CD14-positive monocyte (primary cell): ENCODE measurements at regions of chr19 and their contacts with region 1.

Region 1: DNA sequence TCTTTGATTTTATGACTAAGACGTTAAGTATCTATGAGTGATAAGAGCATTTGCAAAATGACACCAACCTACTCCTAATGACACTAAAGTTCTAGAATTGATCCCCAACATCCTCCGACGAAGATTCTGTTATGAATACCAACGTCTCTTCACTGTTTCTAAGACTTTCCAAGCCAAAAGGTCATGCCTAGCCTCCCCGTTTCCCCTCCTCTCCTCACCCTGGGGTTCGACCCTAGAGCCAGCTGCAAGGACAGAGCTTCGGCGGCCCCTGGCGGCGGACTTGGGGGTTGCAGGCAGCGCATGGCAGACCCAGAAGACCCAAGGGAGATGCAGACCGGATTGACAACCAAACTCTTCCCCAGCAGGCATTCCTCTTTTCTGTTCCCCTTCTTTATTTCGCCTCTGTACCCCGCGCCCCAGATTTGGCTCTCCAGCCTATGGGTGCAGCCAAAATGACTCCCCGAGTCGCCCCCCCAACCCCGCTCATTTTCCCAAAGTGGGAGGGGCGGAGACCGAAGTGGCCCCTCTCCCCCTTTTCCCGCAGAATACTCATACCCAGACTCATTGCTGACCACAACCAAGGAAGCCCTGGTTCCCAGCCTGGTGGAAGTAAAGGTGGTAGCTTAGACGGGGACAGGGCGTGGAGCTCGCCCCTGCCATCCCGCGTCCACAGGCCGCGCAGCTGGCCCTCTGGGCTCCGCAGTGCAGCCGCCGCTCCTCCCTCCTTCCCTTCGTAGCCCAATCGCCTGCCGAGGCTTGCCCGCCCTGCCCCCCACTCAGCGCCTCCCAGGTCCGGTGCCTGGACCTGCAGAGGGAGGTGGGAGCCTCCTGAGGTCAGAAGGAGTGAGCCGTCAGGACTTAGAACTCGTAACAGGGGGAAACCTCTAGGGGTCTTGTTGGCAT is 4.1 kb upstream of the EML2 start:
- DNase-seq: peak; percentile 82 to 86 (median 82)
- H3K4me3 ChIP-seq: peak overlapping the region in 1 of 3 experiments; percentile 28
- H3K4me3 Mint-ChIP-seq: peak overlapping the region; percentile 69 to 83
- H3K27ac ChIP-seq: peak overlapping the region; percentile 52 to 96
- H3K27ac Mint-ChIP-seq: peak overlapping the region; percentile 57 to 96 (median 92)
- H3K4me1 ChIP-seq: peaks cover 59 to 67% of the 10 kb centered on the region in 2 donors
- H3K4me1 Mint-ChIP-seq: peaks cover 46% of the 10 kb centered on the region
- H3K27me3 ChIP-seq: peaks cover 16 to 33% of the 10 kb centered on the region in 2 donors
- H3K27me3 Mint-ChIP-seq: peaks cover 39 to 46% (median 40%) of the 10 kb centered on the region in 3 donors
- CTCF ChIP-seq: peak; percentile 97

Region 2: DNA sequence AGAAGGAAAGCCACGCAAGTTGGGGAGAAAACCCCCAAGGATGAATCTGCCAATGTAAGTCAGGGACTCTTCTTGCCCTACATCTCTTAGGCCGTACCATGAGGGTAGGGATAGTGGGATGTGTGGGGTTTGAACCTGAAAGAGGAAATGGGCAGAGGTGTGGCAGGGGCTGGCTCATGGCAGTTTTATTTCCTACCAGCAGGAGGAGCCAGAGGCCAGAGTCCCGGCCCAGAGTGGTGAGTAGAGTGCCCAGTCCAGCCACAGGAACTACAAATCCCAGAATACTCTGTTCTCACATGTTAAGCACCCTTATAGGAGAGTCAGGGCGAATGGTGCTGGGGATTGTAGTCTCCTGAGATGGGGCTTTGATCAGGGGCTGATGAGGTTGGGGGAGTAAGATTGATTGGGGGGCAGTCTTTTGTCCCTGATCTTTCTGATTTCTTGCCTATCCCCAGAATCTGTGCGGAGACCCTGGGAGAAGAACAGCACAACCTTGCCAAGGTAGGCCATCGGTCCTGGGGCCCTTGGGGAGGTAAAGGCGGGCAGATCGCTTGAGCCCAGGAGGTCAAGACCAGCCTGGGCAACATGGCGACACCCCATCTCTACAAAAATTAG is 119.5 kb before region 1 on chr19:
- intact Hi-C with region 1: loop called (anchors 10 kb)
- DNase-seq: peak; percentile 88 to 93 (median 91)
- H3K4me3 ChIP-seq: peak overlapping the region in 1 of 3 experiments; percentile 45
- H3K4me3 Mint-ChIP-seq: peak overlapping the region in 1 of 2 donors; percentile 30
- H3K27ac ChIP-seq: peak overlapping the region; percentile 67 to 91
- H3K27ac Mint-ChIP-seq: peak overlapping the region; percentile 92 to 98 (median 94)
- H3K4me1 ChIP-seq: peaks cover 78 to 84% of the 10 kb centered on the region in 2 donors
- H3K4me1 Mint-ChIP-seq: peaks cover 67% of the 10 kb centered on the region
- H3K27me3 ChIP-seq: peaks cover 0 to 8% of the 10 kb centered on the region in 2 donors
- H3K27me3 Mint-ChIP-seq: peaks cover 16 to 19% (median 16%) of the 10 kb centered on the region in 3 donors
- CTCF ChIP-seq: peak; percentile 88

Region 3: DNA sequence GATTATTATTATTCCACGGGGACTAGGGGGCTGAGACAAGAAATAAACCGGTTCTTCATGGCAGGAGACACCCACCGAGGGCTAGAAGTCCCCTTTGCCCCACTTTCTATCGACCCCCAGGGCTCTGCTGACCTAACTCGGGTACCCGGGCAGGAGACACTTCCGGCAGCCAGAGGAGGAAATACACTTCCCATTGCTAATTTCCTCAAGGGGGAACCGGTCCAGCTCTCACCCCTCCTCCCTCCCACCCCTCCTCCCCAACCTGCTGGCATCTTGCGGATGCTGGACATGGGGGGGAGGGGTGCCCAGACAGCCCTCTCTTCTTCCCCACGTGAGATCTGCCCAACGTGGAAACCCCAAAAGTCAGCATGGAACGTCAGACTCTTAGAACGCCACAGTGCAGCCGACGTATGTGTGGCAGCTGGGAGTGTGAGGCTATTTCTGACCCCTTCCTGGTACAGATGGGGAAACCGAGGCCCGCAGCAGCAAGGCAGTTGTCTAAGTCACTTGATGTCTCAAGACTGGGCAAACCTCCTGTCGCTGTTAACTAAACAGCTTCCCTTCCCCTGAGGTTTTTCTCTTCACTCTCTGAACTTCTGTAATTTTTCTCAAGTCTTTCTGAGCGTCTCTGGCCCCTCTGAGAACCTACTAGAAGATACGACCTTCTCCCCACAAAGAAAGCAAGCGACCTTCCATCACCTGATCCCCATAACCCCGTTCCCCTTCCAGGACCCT is 44.8 kb before region 1 on chr19:
- intact Hi-C with region 1: loop called in 1 of 2 experiments (anchors 5 kb)
- DNase-seq: peak in 2 of 3 donors; percentile 55 to 77
- H3K4me3 ChIP-seq: peak overlapping the region in 1 of 3 experiments; percentile 43
- H3K4me3 Mint-ChIP-seq: peak overlapping the region in 1 of 2 donors; percentile 82
- H3K27ac ChIP-seq: no peak overlapping the region
- H3K27ac Mint-ChIP-seq: peak overlapping the region in 2 of 7 donors; percentile 69 to 77
- H3K4me1 ChIP-seq: peaks cover 29 to 43% of the 10 kb centered on the region in 2 donors
- H3K4me1 Mint-ChIP-seq: peaks cover 42% of the 10 kb centered on the region
- H3K27me3 ChIP-seq: peaks cover 38 to 68% of the 10 kb centered on the region in 2 donors
- H3K27me3 Mint-ChIP-seq: peaks cover 79 to 82% (median 81%) of the 10 kb centered on the region in 3 donors
- CTCF ChIP-seq: no peak

Region 4: GRCh38 chr19:45681391-45682015 is 38.2 kb after region 1 on chr19:
- intact Hi-C with region 1: loop called in 1 of 2 experiments (anchors 5 kb)
- DNase-seq: peak; percentile 77 to 83 (median 82)
- H3K4me3 ChIP-seq: peak overlapping the region in 2 of 3 experiments; percentile 16 to 62
- H3K4me3 Mint-ChIP-seq: peak overlapping the region; percentile 76 to 93
- H3K27ac ChIP-seq: no peak overlapping the region
- H3K27ac Mint-ChIP-seq: peak overlapping the region in 3 of 7 donors; percentile 50 to 87 (median 59)
- H3K4me1 ChIP-seq: peaks cover 26 to 27% of the 10 kb centered on the region in 2 donors
- H3K4me1 Mint-ChIP-seq: peaks cover 27% of the 10 kb centered on the region
- H3K27me3 ChIP-seq: peaks cover 13 to 31% of the 10 kb centered on the region in 2 donors
- H3K27me3 Mint-ChIP-seq: peaks cover 39 to 46% (median 40%) of the 10 kb centered on the region in 3 donors
- CTCF ChIP-seq: peak; percentile 99

Region 5: GRCh38 chr19:45770192-45771101 is 127.2 kb after region 1 on chr19:
- intact Hi-C with region 1: no loop called
- DNase-seq: peak; percentile 75 to 80 (median 76)
- H3K4me3 ChIP-seq: peak overlapping the region in 2 of 3 experiments; percentile 26 to 77
- H3K4me3 Mint-ChIP-seq: peak overlapping the region; percentile 58 to 88
- H3K27ac ChIP-seq: no peak overlapping the region
- H3K27ac Mint-ChIP-seq: peak overlapping the region in 1 of 7 donors; percentile 50
- H3K4me1 ChIP-seq: peaks cover 27 to 35% of the 10 kb centered on the region in 2 donors
- H3K4me1 Mint-ChIP-seq: peaks cover 22% of the 10 kb centered on the region
- H3K27me3 ChIP-seq: peaks cover 58 to 92% of the 10 kb centered on the region in 2 donors
- H3K27me3 Mint-ChIP-seq: peaks cover 75 to 99% (median 82%) of the 10 kb centered on the region in 3 donors
- CTCF ChIP-seq: peak; percentile 99